Breast epithelium (tissue), 4 donors: ENCODE measurements at regions of chr15 and their contacts with region 1.

Region 1: GRCh38 chr15:25055356-25056068 is 100.7 kb downstream of the SNRPN start:
- DNase-seq: no peak
- H3K4me3 ChIP-seq: peak overlapping the region in 1 of 3 donors; percentile 41
- H3K27ac ChIP-seq: no peak overlapping the region
- H3K4me1 ChIP-seq: no peaks in the 10 kb centered on the region
- H3K27me3 ChIP-seq: no peaks in the 10 kb centered on the region
- CTCF ChIP-seq: no peak
- POLR2A ChIP-seq: no peak

Region 2: GRCh38 chr15:25087137-25087536 is 31.6 kb after region 1 on chr15:
- intact Hi-C with region 1: loop called (anchors 1 kb)
- DNase-seq: no peak
- H3K4me3 ChIP-seq: no peak overlapping the region
- H3K27ac ChIP-seq: no peak overlapping the region
- H3K4me1 ChIP-seq: no peaks in the 10 kb centered on the region
- H3K27me3 ChIP-seq: no peaks in the 10 kb centered on the region
- CTCF ChIP-seq: no peak
- POLR2A ChIP-seq: no peak